Right ventricle myocardium superior (tissue), 1 donor: ENCODE measurements at regions of chr20 and their contacts with region 1.

Region 1: GRCh38 chr20:11274141-11274594 is 600.4 kb upstream of the JAG1 start:
- DNase-seq: no peak
- ATAC-seq: peak; percentile 95

Region 2: DNA sequence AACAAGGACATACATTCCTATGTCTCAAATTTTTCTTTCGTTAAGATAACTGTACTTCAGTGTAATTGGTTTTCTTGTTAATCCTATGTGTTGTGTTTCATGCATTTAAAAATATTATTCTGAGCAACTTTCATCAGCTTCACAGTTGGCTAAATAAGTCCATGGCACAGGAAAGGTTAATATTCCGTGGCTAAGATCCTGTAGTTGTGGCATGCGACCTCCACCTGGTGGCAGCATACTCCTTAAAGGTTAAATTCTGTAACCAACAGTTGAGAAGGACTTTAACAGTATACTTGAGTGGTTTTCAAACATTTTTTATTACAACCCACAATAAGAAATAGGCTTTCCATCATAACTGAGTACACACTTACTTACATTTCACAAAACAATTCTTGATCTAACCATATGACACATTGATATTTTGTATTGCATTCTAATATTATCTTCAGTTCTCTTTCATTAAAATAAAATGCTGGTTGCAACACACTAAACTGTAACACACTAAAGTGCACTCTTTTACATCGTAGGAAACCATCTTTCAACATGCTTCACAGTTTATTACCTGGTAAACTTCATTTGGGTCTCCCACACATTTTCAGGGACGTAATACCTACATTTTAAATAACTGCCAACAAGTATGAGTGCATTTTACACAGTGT is 720.7 kb before region 1 on chr20:
- intact Hi-C with region 1: loop called (anchors 5 kb)
- DNase-seq: peak; percentile 79
- ATAC-seq: peak; percentile 82

Region 3: DNA sequence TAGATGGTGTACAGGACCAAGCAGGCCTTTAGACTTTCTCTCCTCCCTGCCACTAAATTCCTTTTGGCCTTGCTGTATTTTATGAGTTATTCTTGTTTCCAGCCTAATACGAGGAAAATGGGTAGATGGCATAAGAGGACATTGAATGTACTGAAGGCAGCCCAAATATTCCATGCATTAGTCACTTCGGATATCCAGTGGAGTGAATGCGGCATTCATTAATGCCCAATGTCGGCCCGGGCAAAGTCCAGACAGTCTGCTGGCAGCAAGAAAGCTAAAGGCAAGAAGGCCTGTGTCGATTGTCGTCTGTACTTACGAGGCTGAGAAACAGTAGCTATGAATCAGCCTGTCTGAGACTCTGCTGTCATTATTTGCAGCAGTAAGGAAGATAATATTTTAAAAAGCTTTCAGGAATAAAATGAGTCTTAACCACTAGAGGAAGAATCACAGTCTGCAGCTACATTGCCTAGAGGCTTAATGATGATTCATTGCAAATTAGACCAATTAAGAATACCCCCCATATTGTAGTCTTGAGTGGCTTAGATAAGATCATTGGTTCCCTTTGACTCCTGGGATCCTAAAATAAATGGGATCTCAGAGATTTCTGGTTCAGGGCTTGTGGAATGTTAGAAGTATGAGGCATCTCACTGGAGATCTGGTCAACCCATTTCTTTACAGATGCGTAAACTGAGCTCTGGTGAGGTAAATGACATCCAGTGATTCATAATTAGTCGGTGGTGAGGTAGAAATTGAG is 66.2 kb before region 1 on chr20:
- intact Hi-C with region 1: no loop called
- DNase-seq: no peak
- ATAC-seq: no peak